H1 (cell line): ENCODE measurements at regions of chr2 and their contacts with region 1.

Region 1: DNA sequence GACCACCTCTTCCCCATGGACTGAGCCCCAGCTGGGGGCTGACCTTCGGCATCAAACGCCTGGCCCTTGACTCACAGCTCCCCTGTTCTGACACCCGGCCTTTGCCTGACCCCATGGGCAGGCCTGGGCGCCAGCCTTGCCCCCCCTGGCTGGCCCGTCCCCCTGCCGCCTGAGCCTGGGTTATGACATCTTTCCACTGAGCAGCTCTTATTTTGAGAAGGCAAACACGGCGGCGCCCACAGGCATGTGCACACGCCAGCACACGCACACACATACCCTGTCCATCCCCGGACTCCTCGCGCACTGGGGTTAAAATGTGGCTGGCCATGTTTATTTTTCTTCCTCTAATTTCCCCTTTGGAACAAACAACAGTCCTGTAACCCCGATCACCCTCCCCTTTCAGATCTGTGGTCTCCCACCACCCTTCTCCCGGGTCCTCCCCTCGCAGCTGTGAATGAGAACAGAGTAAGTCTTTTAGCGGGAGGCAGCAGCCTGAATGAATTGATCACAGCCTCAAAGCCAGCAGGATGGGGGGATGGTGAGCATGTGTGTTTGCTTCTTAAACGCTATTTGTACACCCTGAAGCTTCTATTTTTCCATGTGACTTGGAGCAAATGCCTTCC is 11.8 kb upstream of the ATOH8 start:
- DNase-seq: no peak
- H3K4me3 ChIP-seq: no peak overlapping the region
- H3K27ac ChIP-seq: no peak overlapping the region
- H3K4me1 ChIP-seq: peaks cover 0 to 7% (median 4%) of the 10 kb centered on the region in 4 experiments; a peak in 2 of 7 replicates
- H3K27me3 ChIP-seq: peaks cover 0 to 3% (median 2%) of the 10 kb centered on the region in 4 experiments; a peak in 3 of 7 replicates
- CTCF ChIP-seq: no peak
- EP300 ChIP-seq: no peak
- POLR2A ChIP-seq: no peak
- RAD21 ChIP-seq: no peak

Region 2: GRCh38 chr2:85723707-85724360 is 18.1 kb before region 1 on chr2:
- CTCF ChIA-PET with region 1: interaction called, 60 read pairs
- POLR2A ChIA-PET with region 1: no interaction called
- DNase-seq: no peak
- H3K4me3 ChIP-seq: no peak overlapping the region
- H3K27ac ChIP-seq: no peak overlapping the region
- H3K4me1 ChIP-seq: no peaks in the 10 kb centered on the region
- H3K27me3 ChIP-seq: no peaks in the 10 kb centered on the region
- CTCF ChIP-seq: no peak
- EP300 ChIP-seq: no peak
- POLR2A ChIP-seq: no peak
- RAD21 ChIP-seq: no peak

Region 3: DNA sequence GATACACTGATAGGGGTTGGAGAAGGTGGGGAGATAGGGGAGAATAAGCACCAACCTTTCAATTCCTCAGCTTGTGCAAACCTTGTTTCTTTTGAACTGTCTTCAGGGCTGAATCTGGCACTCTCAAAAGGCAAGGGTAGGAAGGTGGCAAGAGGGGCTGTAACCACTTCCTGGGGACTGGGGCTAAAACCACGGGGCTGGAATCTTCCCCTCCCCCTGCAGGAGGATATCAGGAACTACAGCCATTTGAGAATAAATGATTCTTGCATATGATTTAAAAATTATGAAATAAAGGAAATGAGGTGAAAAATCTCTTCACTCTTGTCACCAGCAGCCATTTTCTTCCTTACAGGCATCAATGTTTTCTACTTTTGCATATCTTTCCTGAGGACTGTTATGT is 62.6 kb after region 1 on chr2:
- CTCF ChIA-PET with region 1: interaction called, 102 read pairs
- POLR2A ChIA-PET with region 1: interaction called, 3 read pairs
- DNase-seq: no peak
- H3K4me3 ChIP-seq: no peak overlapping the region
- H3K27ac ChIP-seq: no peak overlapping the region
- H3K4me1 ChIP-seq: no peaks in the 10 kb centered on the region
- H3K27me3 ChIP-seq: peaks cover 0 to 2% (median 0%) of the 10 kb centered on the region in 4 experiments; a peak in 1 of 7 replicates
- CTCF ChIP-seq: peak; percentile 51 to 61 (median 59)
- EP300 ChIP-seq: no peak
- POLR2A ChIP-seq: no peak
- RAD21 ChIP-seq: peak; percentile 62